AG04449 (cell line): ENCODE measurements at regions of chr3 and their contacts with region 1.

Region 1: GRCh38 chr3:99172736-99173657 is 271.5 kb upstream of the DCBLD2 start:
- DNase-seq: peak; percentile 34
- H3K4me3 ChIP-seq: no peak overlapping the region
- CTCF ChIP-seq: peak; percentile 70

Region 2: DNA sequence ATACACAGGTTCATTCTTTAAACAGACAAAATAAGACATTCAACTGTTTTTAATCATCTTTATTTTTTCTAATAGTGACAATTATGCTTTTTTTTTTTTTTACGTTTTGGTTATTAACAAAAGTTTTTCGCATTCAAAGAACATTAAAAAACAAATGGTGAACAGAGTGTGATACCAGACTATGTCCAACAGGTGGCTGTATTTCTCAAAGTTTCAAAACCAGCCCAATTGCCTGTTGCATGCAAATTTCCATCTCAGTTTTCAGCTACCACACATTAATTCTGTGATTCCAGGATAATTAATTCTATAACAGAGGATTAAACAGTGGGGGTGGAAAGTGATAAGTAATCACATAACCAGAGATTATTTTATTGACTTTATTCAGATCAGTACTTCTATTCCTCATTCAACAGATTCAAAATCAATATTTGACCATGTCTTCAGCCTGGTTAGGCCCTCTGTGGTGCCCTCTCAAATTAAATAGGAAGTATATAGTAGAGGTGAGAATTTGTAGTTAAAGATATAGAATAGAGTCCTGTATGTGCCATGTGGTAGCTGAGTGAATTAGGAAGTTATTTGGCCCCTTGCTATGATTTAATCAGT is 149.3 kb before region 1 on chr3:
- CTCF ChIA-PET with region 1: interaction called, 62 read pairs
- POLR2A ChIA-PET with region 1: no interaction called
- DNase-seq: no peak
- H3K4me3 ChIP-seq: no peak overlapping the region
- CTCF ChIP-seq: peak; percentile 52

Region 3: GRCh38 chr3:99041747-99042146 is 131.2 kb before region 1 on chr3:
- CTCF ChIA-PET with region 1: no interaction called
- POLR2A ChIA-PET with region 1: no interaction called
- DNase-seq: no peak
- H3K4me3 ChIP-seq: no peak overlapping the region
- CTCF ChIP-seq: no peak

Region 4: GRCh38 chr3:99145031-99145430 is 28.0 kb before region 1 on chr3:
- CTCF ChIA-PET with region 1: interaction called, 29 read pairs
- POLR2A ChIA-PET with region 1: no interaction called
- DNase-seq: no peak
- H3K4me3 ChIP-seq: no peak overlapping the region
- CTCF ChIP-seq: no peak

Region 5: DNA sequence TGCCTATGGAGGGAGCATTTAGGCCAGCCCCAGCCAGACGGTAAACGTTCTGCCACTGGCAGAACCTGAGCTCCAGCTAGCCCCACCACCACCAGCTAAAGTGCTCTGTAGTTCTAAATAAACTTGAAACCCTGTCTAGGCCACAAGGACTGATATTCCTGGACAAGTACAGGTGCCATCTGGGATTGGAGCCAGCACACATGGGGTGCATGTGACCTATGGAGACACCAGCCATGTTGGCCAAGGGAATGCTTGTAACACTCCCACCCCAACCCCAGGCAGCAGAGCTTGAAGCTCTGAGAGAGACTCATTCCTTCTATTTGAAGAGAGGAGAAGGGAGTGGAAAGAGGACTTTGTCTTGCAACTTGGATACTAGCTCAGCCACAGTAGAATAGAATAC is 13.0 kb after region 1 on chr3:
- CTCF ChIA-PET with region 1: interaction called, 47 read pairs
- POLR2A ChIA-PET with region 1: no interaction called
- DNase-seq: no peak
- H3K4me3 ChIP-seq: no peak overlapping the region
- CTCF ChIP-seq: no peak

Region 6: DNA sequence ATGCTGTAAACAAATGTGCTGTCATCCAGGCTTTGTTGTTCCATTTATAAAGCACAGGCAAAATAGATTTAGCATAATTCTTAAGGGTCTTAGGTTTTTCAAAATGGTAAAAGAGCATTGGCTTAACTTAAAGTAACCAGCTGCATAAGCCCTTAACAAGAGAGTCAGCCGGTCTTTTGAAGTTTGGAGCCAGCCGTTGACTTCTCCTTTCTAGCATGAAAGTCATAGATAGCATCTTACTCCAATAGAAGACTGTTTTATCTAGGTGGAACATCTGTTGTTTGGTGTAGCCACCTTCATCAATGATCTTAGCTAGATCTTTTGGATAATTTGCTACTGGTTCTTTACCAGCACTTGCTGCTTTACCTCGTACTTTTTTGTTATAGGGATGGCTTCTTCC is 26.0 kb after region 1 on chr3:
- CTCF ChIA-PET with region 1: interaction called, 18 read pairs
- POLR2A ChIA-PET with region 1: no interaction called
- DNase-seq: no peak
- H3K4me3 ChIP-seq: no peak overlapping the region
- CTCF ChIP-seq: no peak